ENCODE measurements at regions of chr6 and their contacts with region 1.

Region 1: DNA sequence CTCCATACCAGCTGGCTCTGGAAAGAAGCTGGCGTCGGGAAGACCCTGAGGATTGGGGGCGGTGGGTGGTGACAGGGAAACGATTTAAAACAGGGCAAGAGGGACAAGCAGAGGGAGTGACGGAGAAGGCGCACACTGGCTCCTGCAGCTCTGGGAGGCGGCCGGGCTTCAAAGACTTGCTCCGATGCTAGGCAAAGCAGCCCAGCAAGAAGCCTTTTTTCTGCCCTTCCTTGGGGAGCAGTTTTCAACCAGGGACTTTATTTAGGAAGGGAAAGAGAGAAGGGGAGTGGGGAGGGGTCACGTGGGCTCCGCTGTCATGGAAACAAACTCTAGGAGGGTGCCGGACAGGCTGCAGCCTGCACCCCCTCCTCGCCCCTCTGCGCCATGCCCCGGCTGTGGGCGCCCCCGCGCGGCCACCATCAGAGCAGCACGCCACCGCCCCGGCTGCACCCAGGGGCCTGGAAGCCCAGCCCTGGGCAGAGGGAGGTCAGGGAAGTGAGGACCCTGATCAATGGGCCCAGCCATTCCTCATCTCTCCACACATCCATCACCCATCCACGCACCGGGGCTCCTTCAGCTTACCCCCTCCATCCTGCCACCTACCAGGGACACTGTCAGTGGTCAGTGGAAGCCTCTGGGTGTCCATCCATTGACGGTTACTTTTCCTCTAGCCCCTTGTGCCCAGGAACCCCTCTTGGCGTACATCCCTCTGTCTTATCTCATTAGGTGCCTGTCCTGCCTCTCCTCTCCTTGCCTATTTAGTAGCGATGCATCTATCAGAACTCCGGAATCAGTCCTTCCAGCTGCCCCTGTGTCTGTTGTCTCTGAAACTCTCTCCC is 66.6 kb upstream of the CCDC167 start:
- DNase-seq: peak; percentile 51
- H3K4me3 ChIP-seq: no peak overlapping the region
- H3K27ac ChIP-seq: no peak overlapping the region
- H3K4me1 ChIP-seq: peaks cover 41% of the 10 kb centered on the region
- CTCF ChIP-seq: peak; percentile 90

Region 2: GRCh38 chr6:37324131-37325033 is 241.9 kb before region 1 on chr6:
- CTCF ChIA-PET with region 1: no interaction called
- POLR2A ChIA-PET with region 1: no interaction called
- intact Hi-C with region 1: loop called (anchors 5 kb)
- DNase-seq: no peak
- H3K4me3 ChIP-seq: no peak overlapping the region
- H3K27ac ChIP-seq: no peak overlapping the region
- H3K4me1 ChIP-seq: no peaks in the 10 kb centered on the region
- CTCF ChIP-seq: no peak

Region 3: DNA sequence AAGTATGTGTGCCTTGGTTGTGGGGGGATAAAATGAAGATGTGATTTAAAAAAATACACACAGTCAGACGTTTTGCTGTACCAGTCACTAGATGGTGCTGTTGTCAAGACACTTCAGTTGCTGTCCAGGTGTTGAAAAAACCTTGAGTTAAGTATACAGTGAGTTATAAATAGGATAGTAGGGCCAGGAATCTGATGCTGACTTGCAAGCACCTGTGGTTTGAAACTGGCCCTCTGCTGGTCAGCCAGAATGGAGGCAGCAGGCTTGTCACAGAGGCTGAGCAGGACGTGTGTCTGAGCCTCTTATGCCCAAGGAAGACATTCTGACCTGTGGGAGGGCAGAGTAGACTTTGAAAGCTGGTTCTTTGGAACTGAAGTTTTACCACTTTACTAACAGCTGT is 184.8 kb before region 1 on chr6:
- CTCF ChIA-PET with region 1: no interaction called
- POLR2A ChIA-PET with region 1: no interaction called
- intact Hi-C with region 1: loop called (anchors 1 kb)
- DNase-seq: peak; percentile 83
- H3K4me3 ChIP-seq: no peak overlapping the region
- H3K27ac ChIP-seq: no peak overlapping the region
- H3K4me1 ChIP-seq: peaks cover 2% of the 10 kb centered on the region
- CTCF ChIP-seq: peak; percentile 91

Region 4: DNA sequence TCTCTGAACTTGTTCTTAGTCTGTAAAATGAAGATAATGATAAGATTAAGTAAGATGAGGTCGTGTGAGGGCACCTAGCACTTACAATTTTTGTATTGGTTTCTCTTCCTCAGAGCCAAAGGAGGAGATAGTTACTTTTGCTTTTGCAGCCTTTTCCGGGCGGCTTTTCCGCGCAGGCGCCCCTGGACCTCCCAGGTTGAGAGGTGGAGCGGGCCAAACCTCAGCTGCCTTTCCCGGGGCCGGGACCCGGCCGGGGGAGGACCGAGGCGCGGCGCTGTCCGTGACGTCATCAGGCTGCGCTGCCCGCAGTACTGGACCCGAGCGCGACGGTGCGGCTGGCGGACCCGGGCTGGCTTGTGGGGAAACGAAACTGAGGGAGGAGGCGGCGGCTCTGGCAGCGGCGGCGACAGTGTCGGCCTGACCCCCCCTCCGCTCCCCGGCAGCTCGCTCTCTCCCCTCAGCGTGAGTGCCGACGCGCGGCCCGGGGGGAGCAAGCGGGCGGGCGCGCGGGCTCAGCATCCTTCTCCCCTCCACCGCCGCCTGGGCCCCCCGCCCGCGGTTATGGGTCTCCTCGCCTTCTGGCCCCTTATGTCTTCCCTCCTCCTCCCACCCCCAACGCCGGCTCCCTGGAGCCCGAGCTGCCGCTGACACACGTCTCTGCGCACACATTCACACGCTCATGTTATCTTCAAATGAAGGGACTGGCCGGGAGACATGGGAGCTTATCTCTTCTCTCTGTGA is 133.2 kb before region 1 on chr6 and contains the start of gene CMTR1:
- CTCF ChIA-PET with region 1: no interaction called
- POLR2A ChIA-PET with region 1: no interaction called
- intact Hi-C with region 1: loop called (anchors 5 kb)
- DNase-seq: peak; percentile 94
- H3K4me3 ChIP-seq: peak within 1 kb of the TSS; percentile 95
- H3K27ac ChIP-seq: peak within 1 kb of the TSS; percentile 69
- H3K4me1 ChIP-seq: peaks cover 27% of the 10 kb centered on the region
- CTCF ChIP-seq: no peak
- total RNA-seq, gene CMTR1: 32.3 and 36.0 TPM in 2 replicates

Region 5: GRCh38 chr6:37483917-37484785 is 82.2 kb before region 1 on chr6:
- CTCF ChIA-PET with region 1: no interaction called
- POLR2A ChIA-PET with region 1: no interaction called
- intact Hi-C with region 1: loop called (anchors 1 kb)
- DNase-seq: peak; percentile 59
- H3K4me3 ChIP-seq: no peak overlapping the region
- H3K27ac ChIP-seq: no peak overlapping the region
- H3K4me1 ChIP-seq: no peaks in the 10 kb centered on the region
- CTCF ChIP-seq: peak; percentile 80

Region 6: GRCh38 chr6:37499433-37500293 is 66.7 kb before region 1 on chr6 and contains the start of gene CCDC167:
- CTCF ChIA-PET with region 1: interaction called, 3 read pairs
- POLR2A ChIA-PET with region 1: interaction called, 8 read pairs
- intact Hi-C with region 1: loop called (anchors 5 kb)
- DNase-seq: peak; percentile 98
- H3K4me3 ChIP-seq: peak within 1 kb of the TSS; percentile 84
- H3K27ac ChIP-seq: peak within 1 kb of the TSS; percentile 49
- H3K4me1 ChIP-seq: peaks cover 52% of the 10 kb centered on the region
- CTCF ChIP-seq: no peak
- total RNA-seq, gene CCDC167: 138 and 153 TPM in 2 replicates

Region 7: GRCh38 chr6:37643851-37644672 is 77.7 kb after region 1 on chr6:
- CTCF ChIA-PET with region 1: no interaction called
- POLR2A ChIA-PET with region 1: no interaction called
- intact Hi-C with region 1: no loop called
- DNase-seq: no peak
- H3K4me3 ChIP-seq: no peak overlapping the region
- H3K27ac ChIP-seq: no peak overlapping the region
- H3K4me1 ChIP-seq: no peaks in the 10 kb centered on the region
- CTCF ChIP-seq: no peak

Measured in OCI-LY7 (cell line).